Activated CD4-positive, alpha-beta T cell treated with anti-CD3 and anti-CD28 coated beads, Interleukin-2, amount 10 ng/mL, durations not matched to agents 24 days and 14 days (primary cell): ENCODE measurements at regions of chr5 and their contacts with region 1.

Region 1: GRCh38 chr5:139482050-139482889 is at the start of gene STING1:
- DNase-seq: peak; percentile 89
- H3K4me3 Mint-ChIP-seq: peak within 1 kb of the TSS; percentile 89
- H3K27ac Mint-ChIP-seq: peak within 1 kb of the TSS; percentile 96
- H3K4me1 Mint-ChIP-seq: peaks cover 38% of the 10 kb centered on the region
- H3K27me3 Mint-ChIP-seq: no peaks in the 10 kb centered on the region
- total RNA-seq, gene STING1: 198 and 201 TPM in 2 replicates

Region 2: GRCh38 chr5:139422307-139422893 is 59.9 kb before region 1 on chr5:
- intact Hi-C with region 1: loop called (anchors 1 kb)
- DNase-seq: peak; percentile 91
- H3K4me3 Mint-ChIP-seq: no peak overlapping the region
- H3K27ac Mint-ChIP-seq: peak overlapping the region; percentile 62
- H3K4me1 Mint-ChIP-seq: peaks cover 32% of the 10 kb centered on the region
- H3K27me3 Mint-ChIP-seq: no peaks in the 10 kb centered on the region

Region 3: GRCh38 chr5:139458580-139459406 is 23.5 kb before region 1 on chr5:
- intact Hi-C with region 1: loop called (anchors 1 kb)
- DNase-seq: peak; percentile 93
- H3K4me3 Mint-ChIP-seq: peak overlapping the region; percentile 75
- H3K27ac Mint-ChIP-seq: peak overlapping the region; percentile 94
- H3K4me1 Mint-ChIP-seq: peaks cover 57% of the 10 kb centered on the region
- H3K27me3 Mint-ChIP-seq: peaks cover under 1% of the 10 kb centered on the region

Region 4: DNA sequence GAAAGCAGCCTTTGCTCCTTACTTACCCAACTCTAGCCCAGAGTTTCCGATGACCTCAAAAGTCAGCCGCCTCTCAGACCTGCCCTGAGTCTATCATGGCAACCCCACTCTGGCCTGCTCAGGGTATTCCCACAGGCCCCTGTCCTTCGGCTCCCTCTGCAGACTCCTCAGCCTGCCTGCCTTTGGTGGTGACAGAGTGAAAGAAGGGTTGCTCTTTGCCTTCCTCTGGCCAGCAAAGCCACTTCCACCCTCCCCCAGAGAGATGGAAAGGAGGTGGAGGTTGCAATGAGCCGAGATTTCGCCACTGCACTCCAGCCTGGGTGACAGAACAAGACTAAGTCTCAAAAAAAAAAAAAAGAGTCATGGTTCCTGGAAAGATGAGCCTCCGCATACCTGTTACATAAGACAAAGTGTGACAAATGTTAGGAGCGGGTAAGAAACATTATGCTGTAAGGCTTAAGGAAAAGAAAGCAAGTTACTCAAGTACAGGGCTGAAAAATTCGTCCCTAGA is 13.8 kb before region 1 on chr5:
- intact Hi-C with region 1: loop called (anchors 1 kb)
- DNase-seq: peak; percentile 78
- H3K4me3 Mint-ChIP-seq: peak overlapping the region; percentile 41
- H3K27ac Mint-ChIP-seq: peak overlapping the region; percentile 75
- H3K4me1 Mint-ChIP-seq: peaks cover 45% of the 10 kb centered on the region
- H3K27me3 Mint-ChIP-seq: no peaks in the 10 kb centered on the region

Region 5: DNA sequence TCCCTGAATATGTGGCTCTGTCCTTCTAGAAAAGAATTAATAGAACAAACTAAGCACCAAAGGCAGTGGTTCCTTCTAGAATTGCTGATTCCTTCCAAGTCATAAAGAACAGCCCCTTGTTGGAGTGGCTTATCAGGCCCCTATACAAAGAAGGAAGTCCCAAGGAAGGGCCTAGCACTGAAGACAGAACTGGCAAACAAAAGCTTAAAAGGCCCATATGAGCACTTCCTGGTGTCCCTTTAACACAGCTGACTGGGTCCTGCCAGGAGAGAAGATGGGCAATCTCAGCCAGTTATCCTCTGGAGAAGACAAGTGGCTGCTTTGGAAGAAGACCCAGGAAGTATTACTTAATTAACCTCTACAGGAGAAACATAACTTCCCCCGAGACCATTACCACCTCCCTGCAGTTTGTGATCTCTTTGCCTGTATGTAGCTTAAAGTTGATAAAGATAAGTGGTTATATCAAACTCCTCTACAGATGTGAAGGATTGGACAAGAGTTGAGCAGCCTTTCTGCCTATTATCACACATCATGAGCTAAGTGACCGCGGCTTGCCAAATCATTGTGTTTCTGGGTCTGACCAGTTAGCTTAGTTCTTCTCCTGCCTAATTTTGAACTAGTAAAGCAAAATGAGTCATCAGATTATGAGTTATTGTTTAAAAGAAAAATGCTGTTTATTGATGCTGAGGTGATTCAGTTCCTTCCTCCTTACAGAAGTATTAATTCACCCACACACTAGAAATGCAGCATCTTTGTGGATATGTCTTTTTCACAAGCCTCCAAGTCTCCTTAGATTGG is 13.6 kb after region 1 on chr5:
- intact Hi-C with region 1: loop called (anchors 2 kb)
- DNase-seq: no peak
- H3K4me3 Mint-ChIP-seq: no peak overlapping the region
- H3K27ac Mint-ChIP-seq: peak overlapping the region; percentile 85
- H3K4me1 Mint-ChIP-seq: peaks cover 20% of the 10 kb centered on the region
- H3K27me3 Mint-ChIP-seq: no peaks in the 10 kb centered on the region